Psoas muscle (tissue), 8 donors: ENCODE measurements at regions of chr15 and their contacts with region 1.

Region 1: DNA sequence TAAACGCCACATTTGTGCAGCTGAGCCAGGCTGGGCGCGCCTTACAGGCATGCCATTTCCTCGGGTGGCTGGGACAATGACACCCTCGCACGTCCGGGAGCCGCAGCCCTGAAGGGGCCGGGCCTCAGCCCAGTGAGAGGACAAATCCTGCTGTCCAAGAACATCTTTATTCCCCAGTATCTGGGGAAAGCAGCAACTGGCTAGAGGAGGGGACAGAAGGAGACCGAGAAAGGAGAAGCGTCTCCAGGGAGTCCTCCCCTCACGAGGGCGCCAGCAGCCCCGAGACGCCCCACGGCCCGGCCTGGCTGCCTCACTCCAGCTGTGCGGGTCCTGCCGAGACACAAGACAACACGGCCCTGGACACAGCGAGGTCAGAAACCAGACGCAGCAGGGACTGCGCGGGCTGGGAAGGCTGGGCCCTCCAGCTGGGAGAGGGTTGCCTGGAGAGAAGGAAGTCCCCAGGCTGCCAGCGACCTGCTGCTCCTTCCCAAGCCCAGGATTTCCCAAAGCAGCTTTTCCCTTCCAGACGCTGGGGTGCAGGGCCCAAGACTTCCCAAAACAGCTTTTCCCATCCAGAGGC is 130.2 kb downstream of the CHSY1 start:
- DNase-seq: peak; percentile 76 to 85
- ATAC-seq: peak; percentile 81 to 90 (median 82)
- H3K4me3 ChIP-seq: peak overlapping the region; percentile 58
- H3K27ac ChIP-seq: peak overlapping the region; percentile 61
- H3K4me1 ChIP-seq: peaks cover 18% of the 10 kb centered on the region
- H3K27me3 ChIP-seq: no peaks in the 10 kb centered on the region
- CTCF ChIP-seq: peak; percentile 39

Region 2: GRCh38 chr15:101148166-101148880 is 26.7 kb after region 1 on chr15:
- intact Hi-C with region 1: no loop called
- DNase-seq: no peak
- ATAC-seq: no peak
- H3K4me3 ChIP-seq: no peak overlapping the region
- H3K27ac ChIP-seq: no peak overlapping the region
- H3K4me1 ChIP-seq: no peaks in the 10 kb centered on the region
- H3K27me3 ChIP-seq: no peaks in the 10 kb centered on the region
- CTCF ChIP-seq: no peak

Region 3: GRCh38 chr15:101162626-101163102 is 41.1 kb after region 1 on chr15:
- intact Hi-C with region 1: loop called in 1 of 2 experiments (anchors 5 kb)
- DNase-seq: peak; percentile 58 to 76
- ATAC-seq: peak; percentile 79 to 93 (median 91)
- H3K4me3 ChIP-seq: no peak overlapping the region
- H3K27ac ChIP-seq: peak overlapping the region; percentile 5
- H3K4me1 ChIP-seq: peaks cover 11% of the 10 kb centered on the region
- H3K27me3 ChIP-seq: no peaks in the 10 kb centered on the region
- CTCF ChIP-seq: no peak